GM12878 (cell line): ENCODE measurements at regions of chr16 and their contacts with region 1.

Region 1: DNA sequence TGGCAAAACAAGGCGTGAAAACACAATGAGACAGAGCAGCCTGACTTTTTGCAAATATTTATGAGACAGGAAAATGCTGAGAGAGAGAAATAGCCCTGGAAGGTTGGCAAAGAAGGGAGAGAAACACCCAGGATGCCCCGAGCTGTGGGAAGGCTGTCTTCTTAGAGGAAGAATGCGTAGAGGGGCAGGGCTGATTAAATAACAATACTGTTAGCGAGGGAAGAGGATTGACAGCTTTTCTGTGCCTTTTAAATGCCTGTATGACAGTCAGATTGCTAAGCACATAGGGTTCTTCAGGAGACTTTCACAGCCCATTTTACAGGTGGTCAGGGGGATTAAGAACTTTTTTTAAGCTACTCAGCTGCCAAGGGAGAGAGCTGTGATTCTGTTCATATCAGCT is 219.2 kb downstream of the SHISA9 start:
- DNase-seq: no peak
- ATAC-seq: no peak
- H3K4me3 ChIP-seq: no peak overlapping the region
- H3K27ac ChIP-seq: no peak overlapping the region
- H3K4me1 ChIP-seq: no peaks in the 10 kb centered on the region
- H3K27me3 ChIP-seq: no peaks in the 10 kb centered on the region
- CTCF ChIP-seq: no peak
- EP300 ChIP-seq: no peak
- POLR2A ChIP-seq: no peak
- RAD21 ChIP-seq: no peak

Region 2: GRCh38 chr16:12876778-12877177 is 243.8 kb before region 1 on chr16:
- CTCF ChIA-PET with region 1: no interaction called
- POLR2A ChIA-PET with region 1: no interaction called
- RAD21 ChIA-PET with region 1: no interaction called
- SMC1A ChIA-PET with region 1: no interaction called
- in situ Hi-C with region 1: no loop called
- intact Hi-C with region 1: no loop called
- DNase-seq: no peak
- ATAC-seq: no peak
- H3K4me3 ChIP-seq: no peak overlapping the region
- H3K27ac ChIP-seq: no peak overlapping the region
- H3K4me1 ChIP-seq: no peaks in the 10 kb centered on the region
- H3K27me3 ChIP-seq: no peaks in the 10 kb centered on the region
- CTCF ChIP-seq: no peak
- EP300 ChIP-seq: no peak
- POLR2A ChIP-seq: no peak
- RAD21 ChIP-seq: no peak

Region 3: DNA sequence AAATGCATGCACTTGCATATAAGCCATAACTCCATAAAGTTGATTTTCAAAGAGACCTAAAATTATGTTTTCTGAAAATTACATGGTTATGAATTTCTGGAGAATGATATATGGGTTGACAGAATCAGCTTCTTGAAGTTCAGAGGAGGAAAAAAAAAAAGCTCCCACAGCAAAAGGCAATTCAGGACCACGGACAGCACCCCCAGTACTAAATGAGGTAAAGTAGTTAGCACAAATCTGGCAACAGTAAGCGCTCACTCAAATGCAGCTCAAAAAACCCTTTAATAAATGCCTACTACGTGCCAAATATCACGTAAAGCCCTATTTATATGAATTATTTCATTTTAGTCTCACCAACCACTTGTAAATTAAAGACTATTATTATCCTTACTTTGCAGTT is 84.0 kb before region 1 on chr16:
- CTCF ChIA-PET with region 1: no interaction called
- POLR2A ChIA-PET with region 1: no interaction called
- RAD21 ChIA-PET with region 1: no interaction called
- SMC1A ChIA-PET with region 1: no interaction called
- in situ Hi-C with region 1: no loop called
- intact Hi-C with region 1: no loop called
- DNase-seq: no peak
- ATAC-seq: no peak
- H3K4me3 ChIP-seq: no peak overlapping the region
- H3K27ac ChIP-seq: no peak overlapping the region
- H3K4me1 ChIP-seq: no peaks in the 10 kb centered on the region
- H3K27me3 ChIP-seq: no peaks in the 10 kb centered on the region
- CTCF ChIP-seq: no peak
- EP300 ChIP-seq: no peak
- POLR2A ChIP-seq: no peak
- RAD21 ChIP-seq: no peak

Region 4: GRCh38 chr16:13098536-13099127 is 21.9 kb before region 1 on chr16:
- CTCF ChIA-PET with region 1: interaction called, 5 read pairs
- POLR2A ChIA-PET with region 1: no interaction called
- RAD21 ChIA-PET with region 1: interaction called, 9 read pairs
- SMC1A ChIA-PET with region 1: interaction called, 10 read pairs
- in situ Hi-C with region 1: no loop called
- intact Hi-C with region 1: no loop called
- DNase-seq: no peak
- ATAC-seq: peak; percentile 54
- H3K4me3 ChIP-seq: no peak overlapping the region
- H3K27ac ChIP-seq: no peak overlapping the region
- H3K4me1 ChIP-seq: no peaks in the 10 kb centered on the region
- H3K27me3 ChIP-seq: no peaks in the 10 kb centered on the region
- CTCF ChIP-seq: no peak
- EP300 ChIP-seq: no peak
- POLR2A ChIP-seq: no peak
- RAD21 ChIP-seq: no peak

Region 5: GRCh38 chr16:13110124-13110796 is 10.3 kb before region 1 on chr16:
- CTCF ChIA-PET with region 1: interaction called, 3 read pairs
- POLR2A ChIA-PET with region 1: interaction called, 4 read pairs
- RAD21 ChIA-PET with region 1: interaction called, 7 read pairs
- SMC1A ChIA-PET with region 1: interaction called, 14 read pairs
- in situ Hi-C with region 1: no loop called
- intact Hi-C with region 1: no loop called
- DNase-seq: no peak
- ATAC-seq: no peak
- H3K4me3 ChIP-seq: no peak overlapping the region
- H3K27ac ChIP-seq: no peak overlapping the region
- H3K4me1 ChIP-seq: no peaks in the 10 kb centered on the region
- H3K27me3 ChIP-seq: no peaks in the 10 kb centered on the region
- CTCF ChIP-seq: no peak
- EP300 ChIP-seq: no peak
- POLR2A ChIP-seq: no peak
- RAD21 ChIP-seq: no peak

Region 6: GRCh38 chr16:13130586-13130985 is 10.0 kb after region 1 on chr16:
- CTCF ChIA-PET with region 1: interaction called, 4 read pairs
- POLR2A ChIA-PET with region 1: interaction called, 3 read pairs
- RAD21 ChIA-PET with region 1: interaction called, 4 read pairs
- SMC1A ChIA-PET with region 1: interaction called, 12 read pairs
- in situ Hi-C with region 1: no loop called
- intact Hi-C with region 1: no loop called
- DNase-seq: no peak
- ATAC-seq: no peak; the same call in 2 of the 3 replicates
- H3K4me3 ChIP-seq: no peak overlapping the region
- H3K27ac ChIP-seq: no peak overlapping the region
- H3K4me1 ChIP-seq: no peaks in the 10 kb centered on the region
- H3K27me3 ChIP-seq: no peaks in the 10 kb centered on the region
- CTCF ChIP-seq: no peak
- EP300 ChIP-seq: no peak
- POLR2A ChIP-seq: no peak
- RAD21 ChIP-seq: no peak

Region 7: DNA sequence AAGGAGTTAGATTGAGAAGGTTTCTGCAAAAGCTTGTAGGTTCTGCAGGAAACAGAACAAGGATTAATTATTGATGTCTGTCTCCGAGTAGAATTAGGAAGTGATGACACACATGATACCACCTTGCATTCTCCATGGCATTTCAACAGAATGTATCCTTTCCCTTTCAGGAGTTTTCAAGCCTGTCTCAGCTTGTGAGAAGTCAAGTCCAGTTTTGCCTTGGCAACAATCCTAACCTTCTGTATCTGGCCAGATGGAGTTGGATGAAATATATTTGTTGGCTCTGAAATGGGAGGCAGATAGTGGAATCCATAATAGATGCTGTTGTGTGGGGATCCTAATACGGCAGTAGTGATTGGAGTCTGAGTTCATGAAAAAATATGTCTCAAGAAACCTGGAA is 16.4 kb after region 1 on chr16:
- CTCF ChIA-PET with region 1: interaction called, 4 read pairs
- POLR2A ChIA-PET with region 1: interaction called, 3 read pairs
- RAD21 ChIA-PET with region 1: interaction called, 4 read pairs
- SMC1A ChIA-PET with region 1: interaction called, 12 read pairs
- in situ Hi-C with region 1: no loop called
- intact Hi-C with region 1: no loop called
- DNase-seq: no peak
- ATAC-seq: no peak
- H3K4me3 ChIP-seq: no peak overlapping the region
- H3K27ac ChIP-seq: no peak overlapping the region
- H3K4me1 ChIP-seq: no peaks in the 10 kb centered on the region
- H3K27me3 ChIP-seq: no peaks in the 10 kb centered on the region
- CTCF ChIP-seq: no peak
- EP300 ChIP-seq: no peak
- POLR2A ChIP-seq: no peak
- RAD21 ChIP-seq: no peak

Region 8: DNA sequence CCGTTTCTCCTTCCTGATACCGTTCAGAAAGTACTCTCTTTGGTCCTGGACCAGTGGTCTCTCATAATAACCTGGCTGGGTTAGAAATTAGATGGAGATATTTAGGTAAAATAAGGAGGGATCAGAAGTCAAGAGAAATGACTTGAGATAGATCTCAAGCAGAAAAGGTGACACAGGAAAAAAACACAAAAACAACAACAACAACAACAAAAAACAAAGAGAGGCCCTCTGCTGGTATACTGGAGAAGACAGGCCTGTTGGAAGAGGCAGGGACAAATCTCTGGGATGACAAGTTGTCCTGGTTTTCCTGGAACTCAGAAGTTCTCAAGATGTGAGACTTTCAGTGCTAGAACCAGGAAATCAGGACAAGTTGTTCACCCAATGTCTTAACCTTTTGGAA is 211.4 kb after region 1 on chr16:
- CTCF ChIA-PET with region 1: no interaction called
- POLR2A ChIA-PET with region 1: no interaction called
- RAD21 ChIA-PET with region 1: no interaction called
- SMC1A ChIA-PET with region 1: no interaction called
- in situ Hi-C with region 1: no loop called
- intact Hi-C with region 1: no loop called
- DNase-seq: no peak
- ATAC-seq: no peak
- H3K4me3 ChIP-seq: no peak overlapping the region
- H3K27ac ChIP-seq: no peak overlapping the region
- H3K4me1 ChIP-seq: peaks cover 4% of the 10 kb centered on the region
- H3K27me3 ChIP-seq: no peaks in the 10 kb centered on the region
- CTCF ChIP-seq: peak in 1 of 3 experiments; percentile 9; a peak in 1 of 6 replicates
- EP300 ChIP-seq: no peak
- POLR2A ChIP-seq: no peak
- RAD21 ChIP-seq: 0 out of 2 replicates have a peak, but pooled peaks have one; percentile 16